GM13977 (cell line): ENCODE measurements at regions of chr10 and their contacts with region 1.

Region 1: DNA sequence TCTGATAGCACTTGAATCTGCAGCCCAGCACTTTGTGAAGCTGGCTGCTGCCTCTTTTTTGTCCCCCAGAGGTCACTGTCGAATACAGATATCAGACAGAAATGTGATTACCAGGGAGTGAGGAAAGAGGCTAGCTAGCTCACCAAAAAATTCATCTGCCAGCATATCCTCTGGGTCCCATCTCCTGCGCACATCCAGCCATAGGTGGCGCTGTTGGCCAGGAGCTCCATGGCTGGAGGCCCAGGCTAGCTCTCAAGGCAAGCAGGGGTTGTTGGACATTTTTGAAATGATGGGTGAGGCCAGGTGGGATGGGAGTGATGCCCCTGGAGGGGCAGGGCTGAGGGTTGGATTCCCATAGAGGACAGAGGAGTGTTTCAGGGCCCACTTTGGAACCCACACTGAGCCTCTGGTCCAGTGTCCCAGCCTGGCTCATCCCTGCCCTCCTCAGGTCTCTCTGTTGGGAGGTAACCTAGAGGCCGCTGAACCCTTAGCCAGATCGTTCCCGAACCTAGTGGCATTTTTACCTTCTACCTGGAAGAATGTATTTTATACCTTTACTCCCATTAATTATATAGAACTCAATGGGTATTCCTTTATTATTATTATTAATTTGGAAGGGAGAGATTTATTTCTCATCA is 14.8 kb downstream of the DPCD start:
- DNase-seq: peak; percentile 86
- CTCF ChIP-seq: peak; percentile 98

Region 2: GRCh38 chr10:101782811-101783735 is 180.2 kb after region 1 on chr10 and contains the start of gene NPM3:
- in situ Hi-C with region 1: loop called (anchors 5 kb)
- DNase-seq: peak; percentile 92
- CTCF ChIP-seq: no peak

Region 3: DNA sequence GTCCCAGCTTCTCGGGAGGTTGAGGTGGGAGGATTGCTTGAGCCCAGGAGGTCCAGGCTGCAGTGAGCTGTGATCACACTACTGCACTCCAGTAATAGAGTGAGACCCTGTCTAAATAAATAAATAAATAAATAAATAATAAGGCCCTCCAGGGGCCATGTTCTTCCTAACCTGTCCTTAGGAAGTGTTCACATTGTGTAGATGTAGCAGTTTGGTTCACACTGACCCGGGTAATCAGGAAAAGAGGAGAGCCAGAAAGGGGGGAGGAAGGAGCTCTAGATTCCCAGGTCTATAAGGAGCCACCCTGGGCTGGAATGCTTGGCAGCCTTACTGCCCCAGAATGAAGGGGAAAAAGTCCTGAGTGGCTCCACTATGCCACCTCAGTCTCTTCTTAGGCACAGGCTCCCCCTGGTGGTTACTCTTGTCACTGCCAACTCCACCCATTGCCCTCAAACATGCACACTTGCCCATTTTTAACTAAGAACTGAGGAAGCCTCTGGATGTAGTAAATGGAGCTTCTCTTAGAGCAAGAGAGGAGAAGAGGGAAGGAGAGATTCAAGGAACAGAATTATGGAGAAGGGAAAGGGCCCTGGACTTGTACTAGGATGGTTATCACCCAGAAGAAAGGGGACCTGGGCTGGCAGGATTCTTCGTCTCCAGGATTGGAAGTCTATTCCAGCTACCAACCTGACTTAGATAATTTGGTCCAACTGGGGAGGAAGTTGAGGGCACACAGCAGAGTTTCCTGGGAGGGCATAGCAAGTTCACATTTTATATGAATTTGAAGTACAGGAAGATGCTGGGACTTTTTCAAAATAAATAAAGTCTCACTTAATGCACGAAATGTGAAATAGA is 470.0 kb after region 1 on chr10:
- in situ Hi-C with region 1: loop called (anchors 10 kb)
- DNase-seq: peak; percentile 84
- CTCF ChIP-seq: peak; percentile 94